Activated naive CD4-positive, alpha-beta T cell treated with anti-CD3 and anti-CD28 coated beads for 36 hours (primary cell): ENCODE measurements at regions of chr19 and their contacts with region 1.

Region 1: DNA sequence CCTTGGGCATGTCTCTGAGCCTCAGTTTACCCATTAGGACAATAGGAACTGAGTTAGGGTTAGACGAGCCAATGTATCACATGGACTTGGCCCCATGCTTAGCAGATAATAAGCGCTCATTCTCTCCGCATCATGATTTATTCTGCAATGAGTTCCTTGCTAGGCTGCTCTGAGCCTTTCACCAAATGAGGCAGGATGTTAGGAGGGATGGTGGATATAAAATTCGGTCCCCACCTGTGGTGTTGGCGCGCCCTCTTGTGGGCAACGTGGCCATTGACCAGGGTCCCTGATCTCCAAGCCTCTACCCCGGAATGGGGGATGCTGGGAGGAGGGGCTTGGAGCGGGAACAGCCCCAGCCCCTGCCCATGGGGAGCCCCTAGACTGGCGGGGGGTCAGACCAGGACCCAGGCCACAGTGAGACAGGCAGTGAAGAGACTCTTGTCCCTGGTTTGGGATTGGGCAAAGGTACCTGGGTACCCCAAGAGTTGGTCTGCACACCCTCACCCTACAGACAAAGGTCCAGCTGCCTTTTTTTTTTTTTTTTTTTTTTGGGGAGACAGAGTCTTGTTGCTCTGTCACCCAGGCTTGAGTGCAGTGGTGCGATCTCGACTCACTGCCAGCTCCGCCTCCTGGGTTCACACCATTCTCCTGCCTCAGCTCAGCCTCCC is 43.9 kb downstream of the CERS4 start:
- DNase-seq: peak; percentile 91
- H3K4me3 Mint-ChIP-seq: no peak overlapping the region
- H3K27ac Mint-ChIP-seq: no peak overlapping the region
- H3K4me1 Mint-ChIP-seq: no peaks in the 10 kb centered on the region
- H3K27me3 Mint-ChIP-seq: no peaks in the 10 kb centered on the region

Region 2: DNA sequence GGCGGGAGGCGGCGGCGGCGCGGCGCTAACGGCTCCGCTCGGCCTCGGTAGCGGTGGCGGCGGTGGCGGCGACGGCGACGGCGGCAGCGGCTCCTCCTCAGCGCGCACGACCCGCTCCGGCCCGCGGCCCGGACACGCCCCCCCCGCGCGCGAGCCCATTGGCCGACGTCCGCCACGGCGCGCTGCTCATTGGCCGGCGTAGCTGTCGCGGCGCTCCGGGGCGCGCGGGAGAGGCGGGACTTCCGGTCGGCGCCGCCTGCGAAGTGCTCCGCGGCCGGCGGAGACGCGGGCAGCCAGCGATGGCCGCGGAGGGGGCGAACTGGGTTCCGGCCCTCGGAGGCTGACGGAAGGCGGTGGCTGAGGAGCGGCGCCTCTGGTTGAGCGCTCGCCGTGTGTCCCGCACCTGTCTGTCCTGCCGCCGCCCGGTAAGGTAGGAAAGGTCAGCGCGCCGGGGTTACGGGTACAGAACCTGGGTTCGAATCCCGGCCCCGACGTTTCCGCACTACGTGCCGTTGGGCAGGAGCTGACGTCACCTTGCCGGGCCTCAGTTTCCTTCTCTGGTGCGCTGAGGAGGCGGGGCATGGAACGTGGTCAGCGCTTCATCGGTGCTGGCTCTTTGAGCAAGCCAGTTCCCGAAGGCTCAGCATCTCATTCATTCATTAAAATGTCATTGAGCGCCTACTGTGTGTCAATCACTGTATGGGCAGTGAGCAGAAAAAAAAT is 247.4 kb before region 1 on chr19 and contains the start of gene ELAVL1:
- CTCF ChIA-PET with region 1: no interaction called
- intact Hi-C with region 1: loop called (anchors 1 kb)
- DNase-seq: peak; percentile 89
- H3K4me3 Mint-ChIP-seq: peak within 1 kb of the TSS; percentile 94
- H3K27ac Mint-ChIP-seq: peak within 1 kb of the TSS; percentile 78
- H3K4me1 Mint-ChIP-seq: peaks cover 35% of the 10 kb centered on the region
- H3K27me3 Mint-ChIP-seq: no peaks in the 10 kb centered on the region
- total RNA-seq, gene ELAVL1: 135 to 140 TPM

Region 3: GRCh38 chr19:8017808-8018207 is 235.2 kb before region 1 on chr19:
- CTCF ChIA-PET with region 1: no interaction called
- intact Hi-C with region 1: loop called (anchors 5 kb)
- DNase-seq: peak; percentile 49
- H3K4me3 Mint-ChIP-seq: no peak overlapping the region
- H3K27ac Mint-ChIP-seq: no peak overlapping the region
- H3K4me1 Mint-ChIP-seq: peaks cover 2% of the 10 kb centered on the region
- H3K27me3 Mint-ChIP-seq: no peaks in the 10 kb centered on the region

Region 4: GRCh38 chr19:8158411-8159074 is 94.5 kb before region 1 on chr19:
- CTCF ChIA-PET with region 1: interaction called, 5 read pairs
- intact Hi-C with region 1: loop called (anchors 1 kb)
- DNase-seq: peak; percentile 63
- H3K4me3 Mint-ChIP-seq: no peak overlapping the region
- H3K27ac Mint-ChIP-seq: no peak overlapping the region
- H3K4me1 Mint-ChIP-seq: peaks cover 1% of the 10 kb centered on the region
- H3K27me3 Mint-ChIP-seq: peaks cover 13% of the 10 kb centered on the region

Region 5: GRCh38 chr19:8174706-8175105 is 78.3 kb before region 1 on chr19:
- CTCF ChIA-PET with region 1: no interaction called
- intact Hi-C with region 1: no loop called
- DNase-seq: no peak
- H3K4me3 Mint-ChIP-seq: no peak overlapping the region
- H3K27ac Mint-ChIP-seq: no peak overlapping the region
- H3K4me1 Mint-ChIP-seq: no peaks in the 10 kb centered on the region
- H3K27me3 Mint-ChIP-seq: no peaks in the 10 kb centered on the region

Region 6: DNA sequence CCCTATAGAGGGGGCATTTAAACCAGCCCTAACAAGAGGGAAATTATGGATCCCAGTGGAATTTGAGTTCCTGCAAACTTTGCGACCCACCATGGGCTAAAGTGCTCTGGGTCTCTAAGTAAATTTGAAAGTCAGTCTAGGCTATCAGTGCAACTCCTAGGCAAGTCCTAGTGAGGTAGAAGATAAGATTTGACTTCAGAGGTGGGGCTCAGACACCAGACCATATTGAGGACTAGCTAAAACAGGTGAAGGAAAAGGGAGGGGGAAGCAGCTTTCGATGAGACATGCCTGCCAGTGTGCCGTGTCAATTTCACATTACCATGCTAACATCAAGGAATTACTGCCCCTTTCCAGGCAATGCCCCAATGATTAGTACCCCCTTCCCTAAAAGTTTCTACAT is 16.7 kb after region 1 on chr19:
- CTCF ChIA-PET with region 1: no interaction called
- intact Hi-C with region 1: no loop called
- DNase-seq: no peak
- H3K4me3 Mint-ChIP-seq: peak overlapping the region; percentile 78
- H3K27ac Mint-ChIP-seq: peak overlapping the region; percentile 84
- H3K4me1 Mint-ChIP-seq: peaks cover 12% of the 10 kb centered on the region
- H3K27me3 Mint-ChIP-seq: no peaks in the 10 kb centered on the region

Region 7: DNA sequence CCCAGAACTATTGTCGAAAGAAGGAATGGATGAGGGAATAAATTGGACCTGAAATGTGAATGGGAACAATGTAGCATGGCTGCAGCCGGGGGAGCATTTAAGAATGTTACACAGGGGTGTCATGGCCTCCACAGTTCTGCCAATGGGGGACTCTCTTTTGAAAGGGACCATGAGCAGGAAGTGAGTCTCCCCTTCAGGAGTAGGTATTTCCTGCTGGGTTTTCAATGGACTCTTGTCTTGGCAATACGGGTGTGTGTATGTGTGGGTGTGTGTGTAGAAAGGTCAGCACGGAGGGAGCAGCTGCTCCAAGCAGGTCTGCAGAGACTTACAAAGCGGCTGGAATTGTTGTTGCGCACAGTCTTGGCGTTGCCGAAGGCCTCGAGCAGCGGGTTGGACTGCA is 299.8 kb after region 1 on chr19:
- CTCF ChIA-PET with region 1: no interaction called
- intact Hi-C with region 1: no loop called
- DNase-seq: no peak
- H3K4me3 Mint-ChIP-seq: no peak overlapping the region
- H3K27ac Mint-ChIP-seq: no peak overlapping the region
- H3K4me1 Mint-ChIP-seq: peaks cover 2% of the 10 kb centered on the region
- H3K27me3 Mint-ChIP-seq: no peaks in the 10 kb centered on the region